Dendritic cell treated with granulocyte-macrophage colony-stimulating factor and Interleukin-4, amounts not matched to agents 40 ng/mL and 50 ng/mL, for 4 days (primary cell): ENCODE measurements at regions of chr7 and their contacts with region 1.

Region 1: GRCh38 chr7:81499262-81500116 is 270.4 kb downstream of the HGF start:
- H3K4me3 Mint-ChIP-seq: no peak overlapping the region
- H3K27ac Mint-ChIP-seq: no peak overlapping the region
- H3K4me1 Mint-ChIP-seq: peaks cover 14% of the 10 kb centered on the region
- H3K27me3 Mint-ChIP-seq: no peaks in the 10 kb centered on the region

Region 2: DNA sequence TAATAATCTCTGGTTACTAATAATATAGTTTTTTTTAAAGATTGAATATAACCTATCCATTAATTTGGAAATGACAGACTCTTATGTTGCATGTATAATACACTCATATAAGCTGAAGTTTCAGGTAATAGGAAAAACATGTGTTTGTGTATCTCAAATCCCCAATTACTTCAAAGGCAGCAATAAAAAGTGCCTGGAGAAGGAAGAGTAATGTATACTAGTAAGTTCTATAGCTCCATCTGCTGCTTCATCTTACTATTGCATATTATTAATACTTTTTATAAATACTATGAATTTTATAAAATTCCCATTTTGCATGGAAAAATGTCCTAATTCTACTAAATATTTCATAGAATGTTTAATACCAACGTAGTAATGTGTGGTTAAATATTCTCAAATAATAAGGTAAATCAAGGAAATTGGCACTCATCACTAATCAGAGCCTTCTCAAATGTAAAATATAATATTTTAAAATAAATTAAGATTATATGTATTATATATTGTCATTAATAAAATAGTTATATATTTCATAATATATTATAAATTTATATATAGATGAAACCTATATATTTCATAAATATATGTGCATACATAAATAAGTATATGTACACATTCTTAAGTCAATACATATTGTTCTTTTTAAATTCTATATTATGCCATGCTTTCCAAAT is 41.5 kb before region 1 on chr7:
- intact Hi-C with region 1: no loop called
- H3K4me3 Mint-ChIP-seq: no peak overlapping the region
- H3K27ac Mint-ChIP-seq: no peak overlapping the region
- H3K4me1 Mint-ChIP-seq: no peaks in the 10 kb centered on the region
- H3K27me3 Mint-ChIP-seq: no peaks in the 10 kb centered on the region

Region 3: DNA sequence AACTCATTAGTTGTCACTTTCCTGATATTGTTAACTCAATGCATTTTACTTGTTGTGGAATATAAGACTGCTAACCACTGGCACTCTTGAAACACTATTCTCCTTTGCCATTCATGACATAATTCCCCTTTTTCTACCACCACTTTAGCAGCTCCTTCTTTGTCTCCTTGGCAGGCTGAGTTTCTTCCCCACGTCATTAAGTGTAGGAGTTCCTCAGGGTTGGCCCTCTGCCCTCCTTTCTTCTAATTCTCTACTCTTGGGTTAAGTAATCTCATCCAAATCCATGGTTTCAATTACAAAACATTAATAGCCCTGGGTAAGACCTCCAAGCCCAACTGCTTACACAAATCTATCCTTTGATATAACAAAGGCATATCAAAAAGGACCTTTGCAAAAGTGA is 95.3 kb after region 1 on chr7:
- intact Hi-C with region 1: no loop called
- H3K4me3 Mint-ChIP-seq: no peak overlapping the region
- H3K27ac Mint-ChIP-seq: no peak overlapping the region
- H3K4me1 Mint-ChIP-seq: no peaks in the 10 kb centered on the region
- H3K27me3 Mint-ChIP-seq: no peaks in the 10 kb centered on the region

Region 4: GRCh38 chr7:82017334-82017943 is 518.0 kb after region 1 on chr7:
- intact Hi-C with region 1: loop called (anchors 1 kb)
- H3K4me3 Mint-ChIP-seq: no peak overlapping the region
- H3K27ac Mint-ChIP-seq: no peak overlapping the region
- H3K4me1 Mint-ChIP-seq: no peaks in the 10 kb centered on the region
- H3K27me3 Mint-ChIP-seq: no peaks in the 10 kb centered on the region